ENCODE measurements at regions of chr17 and their contacts with region 1.

Region 1: GRCh38 chr17:55624772-55625433 is 97.8 kb downstream of the TMEM100 start:
- DNase-seq: peak; percentile 19
- CTCF ChIP-seq: no peak

Region 2: GRCh38 chr17:55641676-55642081 is 16.8 kb after region 1 on chr17:
- CTCF ChIA-PET with region 1: interaction called, 10 read pairs
- POLR2A ChIA-PET with region 1: no interaction called
- DNase-seq: peak; percentile 26
- CTCF ChIP-seq: peak; percentile 35

Measured in GM10248 (cell line).